ENCODE measurements at regions of chr9 and their contacts with region 1.

Region 1: GRCh38 chr9:114505187-114506081 is at the start of gene WHRN:
- DNase-seq: peak; percentile 89
- H3K4me3 Mint-ChIP-seq: peak within 1 kb of the TSS; percentile 73
- H3K27ac Mint-ChIP-seq: no peak within 1 kb of the TSS
- H3K4me1 Mint-ChIP-seq: peaks cover 31% of the 10 kb centered on the region
- H3K27me3 Mint-ChIP-seq: peaks cover 60% of the 10 kb centered on the region
- total RNA-seq, gene WHRN: 4.5 to 4.8 TPM

Region 2: GRCh38 chr9:114487607-114488300 is 17.7 kb before region 1 on chr9:
- CTCF ChIA-PET with region 1: interaction called, 30 read pairs
- POLR2A ChIA-PET with region 1: no interaction called
- DNase-seq: peak; percentile 63
- H3K4me3 Mint-ChIP-seq: no peak overlapping the region
- H3K27ac Mint-ChIP-seq: no peak overlapping the region
- H3K4me1 Mint-ChIP-seq: peaks cover 34% of the 10 kb centered on the region
- H3K27me3 Mint-ChIP-seq: peaks cover 12% of the 10 kb centered on the region